Activated CD8-positive, alpha-beta T cell treated with anti-CD3 and anti-CD28 coated beads for 36 hours (primary cell): ENCODE measurements at regions of chr5 and their contacts with region 1.

Region 1: GRCh38 chr5:134533115-134533815 is 7.8 kb downstream of the JADE2 start:
- DNase-seq: no peak
- ATAC-seq: no peak
- H3K4me3 Mint-ChIP-seq: no peak overlapping the region
- H3K27ac Mint-ChIP-seq: peak overlapping the region; percentile 48
- H3K4me1 Mint-ChIP-seq: peaks cover 95% of the 10 kb centered on the region
- H3K27me3 Mint-ChIP-seq: no peaks in the 10 kb centered on the region
- CTCF ChIP-seq: no peak

Region 2: DNA sequence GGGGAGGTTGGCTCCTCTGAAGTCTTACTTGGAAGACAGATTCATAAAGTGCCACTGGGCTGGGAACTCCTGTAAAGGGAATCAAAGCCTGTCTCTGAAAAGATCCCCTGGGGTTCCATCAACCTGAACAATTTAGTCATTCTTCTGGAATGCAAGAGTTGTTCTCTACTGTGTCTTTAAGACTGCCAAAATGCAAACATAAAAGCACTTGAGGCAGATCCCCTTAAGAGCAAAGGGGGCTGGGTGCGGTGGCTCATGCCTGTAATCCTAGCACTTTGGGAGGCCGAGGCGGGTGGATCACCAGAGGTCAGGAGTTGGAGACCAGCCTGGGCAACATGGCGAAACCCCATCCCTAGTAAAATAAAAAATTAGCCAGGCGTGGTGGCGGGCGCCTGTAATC is 138.3 kb before region 1 on chr5:
- CTCF ChIA-PET with region 1: no interaction called
- POLR2A ChIA-PET with region 1: no interaction called
- intact Hi-C with region 1: no loop called
- DNase-seq: no peak
- ATAC-seq: no peak
- H3K4me3 Mint-ChIP-seq: no peak overlapping the region
- H3K27ac Mint-ChIP-seq: no peak overlapping the region
- H3K4me1 Mint-ChIP-seq: peaks cover 11% of the 10 kb centered on the region
- H3K27me3 Mint-ChIP-seq: no peaks in the 10 kb centered on the region
- CTCF ChIP-seq: no peak

Region 3: GRCh38 chr5:134543820-134544614 is 10.8 kb after region 1 on chr5:
- CTCF ChIA-PET with region 1: interaction called, 15 read pairs
- POLR2A ChIA-PET with region 1: interaction called, 10 read pairs
- intact Hi-C with region 1: no loop called
- DNase-seq: peak; percentile 76
- ATAC-seq: peak; percentile 84
- H3K4me3 Mint-ChIP-seq: peak overlapping the region; percentile 76
- H3K27ac Mint-ChIP-seq: peak overlapping the region; percentile 96
- H3K4me1 Mint-ChIP-seq: peaks cover 70% of the 10 kb centered on the region
- H3K27me3 Mint-ChIP-seq: no peaks in the 10 kb centered on the region
- CTCF ChIP-seq: no peak